Endothelial cell of umbilical vein (primary cell): ENCODE measurements at regions of chr12 and their contacts with region 1.

Region 1: GRCh38 chr12:98373025-98373554 is 142.3 kb upstream of the TMPO start:
- DNase-seq: peak; percentile 61
- H3K4me3 ChIP-seq: no peak overlapping the region
- H3K27ac ChIP-seq: no peak overlapping the region
- H3K4me1 ChIP-seq: peaks cover 27% of the 10 kb centered on the region
- H3K27me3 ChIP-seq: peaks cover 7 to 9% of the 10 kb centered on the region in 2 experiments
- CTCF ChIP-seq: peak; percentile 46 to 47
- POLR2A ChIP-seq: no peak

Region 2: DNA sequence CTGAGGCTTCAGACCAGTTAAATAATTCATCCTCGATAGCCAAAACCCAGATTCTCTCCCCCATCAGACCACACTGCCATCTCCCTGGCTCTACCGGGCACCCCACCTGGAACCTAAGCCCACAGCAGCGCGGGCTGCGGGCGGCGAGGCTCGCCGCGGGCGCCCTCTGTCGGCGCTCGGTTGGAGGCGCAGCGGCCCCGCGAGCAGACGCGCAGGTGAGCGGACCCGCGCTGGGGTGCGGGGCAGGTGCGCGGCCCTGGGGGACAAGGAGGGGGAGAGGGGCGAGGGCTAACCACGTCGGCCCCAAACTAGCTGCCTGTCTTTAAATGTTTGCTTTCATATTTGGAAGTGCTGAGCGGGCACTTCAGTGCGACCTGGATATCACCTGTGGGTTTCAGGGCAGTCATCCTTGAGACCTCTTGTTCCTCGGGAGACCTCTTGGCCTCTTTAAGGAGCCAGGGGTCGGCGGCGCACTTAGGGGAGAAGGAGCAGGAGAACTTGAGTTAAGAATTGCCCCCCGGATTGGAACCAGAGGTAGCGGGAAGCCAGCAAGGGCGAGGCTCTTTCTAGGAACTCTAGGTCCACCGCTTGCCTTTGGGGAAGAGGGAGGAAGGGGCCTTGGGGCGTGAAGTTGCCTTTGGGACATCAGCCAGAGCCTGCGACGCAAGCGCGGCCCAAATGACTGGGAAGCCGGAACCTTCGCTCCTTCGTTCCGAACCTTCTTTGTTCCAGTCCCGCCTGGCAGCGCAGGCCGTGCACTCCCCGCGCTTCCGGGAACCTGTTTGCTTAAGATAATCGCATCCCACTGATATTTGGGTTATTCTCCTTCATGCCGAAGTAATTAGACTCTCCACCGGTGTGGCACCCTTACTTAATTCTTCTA is 1387.4 kb before region 1 on chr12:
- CTCF ChIA-PET with region 1: interaction called, 30 read pairs
- POLR2A ChIA-PET with region 1: interaction called, 3 read pairs
- dilution Hi-C with region 1: no loop called
- intact Hi-C with region 1: loop called (anchors 2 kb)
- DNase-seq: peak; percentile 23
- H3K4me3 ChIP-seq: peak overlapping the region; percentile 5 to 41 (median 39)
- H3K27ac ChIP-seq: no peak overlapping the region
- H3K4me1 ChIP-seq: peaks cover 7% of the 10 kb centered on the region
- H3K27me3 ChIP-seq: peaks cover 14 to 33% of the 10 kb centered on the region in 2 experiments
- CTCF ChIP-seq: peak; percentile 80 to 90
- POLR2A ChIP-seq: no peak

Region 3: DNA sequence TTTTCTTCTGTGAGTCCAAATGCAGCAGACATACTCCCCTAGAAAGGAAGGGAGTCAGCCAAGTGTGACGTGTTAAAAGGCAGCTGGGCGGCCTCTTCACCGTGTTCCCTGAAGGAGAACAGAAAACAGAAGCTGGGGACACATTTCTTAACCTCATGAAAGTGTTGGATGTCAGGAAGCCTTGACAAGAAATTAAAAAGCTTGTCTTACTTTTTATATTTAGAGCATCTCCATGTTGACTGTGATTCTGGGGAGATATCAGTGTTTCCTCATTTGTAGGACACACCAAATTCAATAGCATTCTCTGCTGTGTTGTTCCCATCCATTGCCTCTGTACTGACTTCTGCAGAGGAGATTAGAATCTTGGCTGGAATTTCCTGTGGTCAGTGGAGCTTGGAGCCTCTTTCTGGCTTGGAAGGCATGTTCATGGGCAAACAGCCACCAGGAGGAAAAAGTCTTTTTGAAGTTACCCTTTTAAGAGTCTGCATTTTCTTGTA is 816.7 kb before region 1 on chr12:
- CTCF ChIA-PET with region 1: no interaction called
- POLR2A ChIA-PET with region 1: no interaction called
- dilution Hi-C with region 1: no loop called
- intact Hi-C with region 1: loop called (anchors 10 kb)
- DNase-seq: peak; percentile 73
- H3K4me3 ChIP-seq: no peak overlapping the region
- H3K27ac ChIP-seq: peak overlapping the region; percentile 52
- H3K4me1 ChIP-seq: peaks cover 9% of the 10 kb centered on the region
- H3K27me3 ChIP-seq: no peaks in the 10 kb centered on the region
- CTCF ChIP-seq: no peak
- POLR2A ChIP-seq: no peak

Region 4: GRCh38 chr12:98002712-98003493 is 370.2 kb before region 1 on chr12:
- CTCF ChIA-PET with region 1: interaction called, 4 read pairs
- POLR2A ChIA-PET with region 1: no interaction called
- dilution Hi-C with region 1: no loop called
- intact Hi-C with region 1: loop called (anchors 2 kb)
- DNase-seq: peak; percentile 31
- H3K4me3 ChIP-seq: no peak overlapping the region
- H3K27ac ChIP-seq: no peak overlapping the region
- H3K4me1 ChIP-seq: no peaks in the 10 kb centered on the region
- H3K27me3 ChIP-seq: no peaks in the 10 kb centered on the region
- CTCF ChIP-seq: peak; percentile 33 to 46
- POLR2A ChIP-seq: no peak

Region 5: DNA sequence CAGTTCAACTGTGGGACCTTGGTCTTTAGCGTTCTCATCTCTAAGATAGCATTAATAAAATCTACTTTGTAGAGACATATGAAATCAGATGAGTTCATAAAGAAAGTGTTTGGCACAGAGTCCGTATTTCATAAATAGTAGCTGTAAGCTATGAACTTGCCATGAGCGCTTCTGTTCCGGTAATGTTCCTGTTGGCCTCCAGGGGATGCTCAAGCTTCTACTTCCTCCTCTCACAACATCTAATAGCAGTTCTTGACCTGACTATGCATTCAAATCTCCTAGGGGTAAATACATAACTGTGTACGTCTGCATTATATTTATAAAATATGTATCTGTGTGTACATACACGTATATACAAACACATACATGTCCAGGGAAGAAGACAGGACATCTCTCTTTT is 145.9 kb before region 1 on chr12:
- CTCF ChIA-PET with region 1: interaction called, 15 read pairs
- POLR2A ChIA-PET with region 1: no interaction called
- dilution Hi-C with region 1: no loop called
- intact Hi-C with region 1: loop called (anchors 1 kb)
- DNase-seq: no peak
- H3K4me3 ChIP-seq: no peak overlapping the region
- H3K27ac ChIP-seq: no peak overlapping the region
- H3K4me1 ChIP-seq: no peaks in the 10 kb centered on the region
- H3K27me3 ChIP-seq: peaks cover 0 to 2% of the 10 kb centered on the region in 2 experiments
- CTCF ChIP-seq: peak in 1 of 2 donors; percentile 31
- POLR2A ChIP-seq: no peak

Region 6: GRCh38 chr12:98397316-98398105 is 24.4 kb after region 1 on chr12:
- CTCF ChIA-PET with region 1: interaction called, 16 read pairs
- POLR2A ChIA-PET with region 1: no interaction called
- dilution Hi-C with region 1: no loop called
- intact Hi-C with region 1: loop called (anchors 1 kb)
- DNase-seq: peak; percentile 84
- H3K4me3 ChIP-seq: peak overlapping the region in 2 of 3 experiments; percentile 28 to 35
- H3K27ac ChIP-seq: no peak overlapping the region
- H3K4me1 ChIP-seq: peaks cover 39% of the 10 kb centered on the region
- H3K27me3 ChIP-seq: no peaks in the 10 kb centered on the region
- CTCF ChIP-seq: peak; percentile 76 to 84
- POLR2A ChIP-seq: no peak

Region 7: GRCh38 chr12:98431089-98431488 is 58.0 kb after region 1 on chr12:
- CTCF ChIA-PET with region 1: no interaction called
- POLR2A ChIA-PET with region 1: no interaction called
- dilution Hi-C with region 1: no loop called
- intact Hi-C with region 1: no loop called
- DNase-seq: no peak
- H3K4me3 ChIP-seq: no peak overlapping the region
- H3K27ac ChIP-seq: no peak overlapping the region
- H3K4me1 ChIP-seq: peaks cover 4% of the 10 kb centered on the region
- H3K27me3 ChIP-seq: no peaks in the 10 kb centered on the region
- CTCF ChIP-seq: no peak
- POLR2A ChIP-seq: no peak

Region 8: DNA sequence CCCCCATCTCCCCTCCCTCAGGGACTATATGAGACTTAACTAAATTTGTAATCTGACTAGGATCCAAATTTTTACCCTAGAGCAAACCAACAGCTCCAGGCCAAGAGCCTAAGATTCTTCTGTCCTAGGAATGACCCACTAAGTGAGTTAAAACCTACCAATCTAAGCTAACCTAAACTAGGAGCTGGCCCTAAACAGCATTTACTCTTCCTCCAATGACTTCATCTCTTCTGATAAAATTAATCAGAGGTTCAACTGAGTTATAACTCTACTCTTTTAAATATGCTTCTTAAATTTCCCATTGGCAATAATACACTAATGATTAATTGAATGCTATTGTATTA is 102.4 kb after region 1 on chr12:
- CTCF ChIA-PET with region 1: no interaction called
- POLR2A ChIA-PET with region 1: no interaction called
- dilution Hi-C with region 1: no loop called
- intact Hi-C with region 1: no loop called
- DNase-seq: no peak
- H3K4me3 ChIP-seq: no peak overlapping the region
- H3K27ac ChIP-seq: no peak overlapping the region
- H3K4me1 ChIP-seq: no peaks in the 10 kb centered on the region
- H3K27me3 ChIP-seq: no peaks in the 10 kb centered on the region
- CTCF ChIP-seq: no peak
- POLR2A ChIP-seq: no peak